Mammary epithelial cell (primary cell): ENCODE measurements at regions of chr19 and their contacts with region 1.

Region 1: GRCh38 chr19:41959056-41960053 is at the start of gene RABAC1:
- DNase-seq: peak; percentile 86
- H3K4me3 ChIP-seq: peak within 1 kb of the TSS; percentile 62 to 93 (median 76)
- H3K27ac ChIP-seq: peak within 1 kb of the TSS; percentile 77
- H3K4me1 ChIP-seq: peaks cover 14% of the 10 kb centered on the region
- H3K27me3 ChIP-seq: no peaks in the 10 kb centered on the region
- CTCF ChIP-seq: peak; percentile 6 to 30
- total RNA-seq, gene RABAC1: 74.8 to 154 TPM

Region 2: DNA sequence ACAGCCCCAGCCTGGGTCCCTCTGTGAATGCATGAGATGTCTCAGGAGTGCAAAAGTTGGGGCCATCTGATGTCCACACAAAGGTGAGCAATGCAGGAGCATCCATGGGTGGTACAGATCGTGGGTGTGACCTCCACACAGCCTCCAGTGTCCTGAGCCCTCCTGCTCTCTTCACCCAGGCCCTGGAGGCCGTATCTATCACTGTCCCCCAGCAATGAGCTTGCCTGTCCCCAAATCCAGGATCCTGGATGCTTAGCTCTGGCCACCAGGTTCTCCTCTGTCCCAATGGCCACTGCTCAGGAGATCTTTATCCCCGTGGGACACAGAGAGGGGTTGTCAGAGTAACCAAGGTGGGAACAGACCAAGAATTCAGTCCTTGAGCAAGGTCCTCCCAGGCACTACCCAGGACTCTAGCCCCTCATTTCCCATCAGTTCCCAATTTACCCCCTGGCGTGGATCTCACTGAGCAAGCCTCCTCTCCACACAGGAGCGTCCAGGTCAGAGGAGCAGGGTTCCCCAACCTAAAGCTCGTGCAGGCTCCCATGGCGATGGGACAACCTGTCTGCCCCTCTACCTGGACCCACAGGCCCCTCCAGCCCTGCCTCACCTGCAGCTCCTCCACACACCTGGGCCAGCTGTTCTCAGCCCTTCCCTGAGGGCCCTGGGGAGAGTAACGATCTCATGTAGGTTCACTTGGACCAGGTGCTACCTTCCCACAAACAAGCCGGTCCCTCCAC is 372.1 kb before region 1 on chr19:
- CTCF ChIA-PET with region 1: no interaction called
- dilution Hi-C with region 1: no loop called
- in situ Hi-C with region 1: no loop called
- intact Hi-C with region 1: no loop called
- DNase-seq: no peak
- H3K4me3 ChIP-seq: no peak overlapping the region
- H3K27ac ChIP-seq: no peak overlapping the region
- H3K4me1 ChIP-seq: no peaks in the 10 kb centered on the region
- H3K27me3 ChIP-seq: no peaks in the 10 kb centered on the region
- CTCF ChIP-seq: no peak

Region 3: DNA sequence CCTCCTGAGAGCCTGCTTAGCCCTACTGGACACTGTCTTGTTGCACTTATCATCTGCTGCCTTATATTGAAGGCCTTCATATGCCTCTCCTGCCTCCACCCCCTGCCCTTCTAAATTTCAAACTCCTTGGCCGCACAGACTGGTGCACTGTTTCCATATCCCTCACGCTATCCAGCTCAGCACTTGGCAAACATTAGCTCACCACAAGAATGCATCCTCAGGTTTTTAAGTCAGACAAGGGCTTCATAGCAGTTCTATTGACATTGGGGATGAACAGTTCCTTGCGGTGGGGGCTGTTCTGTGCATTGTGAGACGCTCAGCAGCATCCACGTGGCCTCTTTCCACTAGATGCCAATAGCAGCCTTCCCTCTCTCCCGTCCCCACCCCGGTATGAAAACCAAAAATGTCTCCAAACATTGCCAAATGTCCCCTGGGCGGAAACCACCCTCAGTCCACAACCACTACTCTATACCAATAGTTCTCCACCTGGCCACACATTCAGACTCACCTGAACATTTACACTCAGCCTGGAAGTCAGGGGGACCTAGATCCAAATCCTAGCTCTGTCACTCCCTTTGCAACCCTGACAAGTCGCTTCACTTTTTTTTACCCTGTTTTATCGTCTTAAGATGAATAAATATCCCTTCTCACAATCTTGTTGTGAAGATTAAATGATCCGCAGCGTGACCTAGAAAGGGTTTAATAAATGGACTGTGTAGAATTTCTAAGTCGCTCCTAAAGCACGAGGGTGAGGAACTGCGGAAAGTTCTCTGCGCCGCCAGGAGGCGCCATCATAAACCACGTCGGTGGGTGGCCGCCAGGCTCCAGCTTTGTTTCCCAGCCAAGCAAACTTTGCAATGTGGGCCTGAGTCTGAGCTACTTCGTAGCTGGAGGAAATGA is 166.6 kb before region 1 on chr19:
- CTCF ChIA-PET with region 1: interaction called, 3 read pairs
- dilution Hi-C with region 1: no loop called
- in situ Hi-C with region 1: no loop called
- intact Hi-C with region 1: loop called (anchors 1 kb)
- DNase-seq: peak; percentile 35
- H3K4me3 ChIP-seq: no peak overlapping the region
- H3K27ac ChIP-seq: no peak overlapping the region
- H3K4me1 ChIP-seq: no peaks in the 10 kb centered on the region
- H3K27me3 ChIP-seq: peaks cover 2% of the 10 kb centered on the region
- CTCF ChIP-seq: peak; percentile 62 to 73

Region 4: DNA sequence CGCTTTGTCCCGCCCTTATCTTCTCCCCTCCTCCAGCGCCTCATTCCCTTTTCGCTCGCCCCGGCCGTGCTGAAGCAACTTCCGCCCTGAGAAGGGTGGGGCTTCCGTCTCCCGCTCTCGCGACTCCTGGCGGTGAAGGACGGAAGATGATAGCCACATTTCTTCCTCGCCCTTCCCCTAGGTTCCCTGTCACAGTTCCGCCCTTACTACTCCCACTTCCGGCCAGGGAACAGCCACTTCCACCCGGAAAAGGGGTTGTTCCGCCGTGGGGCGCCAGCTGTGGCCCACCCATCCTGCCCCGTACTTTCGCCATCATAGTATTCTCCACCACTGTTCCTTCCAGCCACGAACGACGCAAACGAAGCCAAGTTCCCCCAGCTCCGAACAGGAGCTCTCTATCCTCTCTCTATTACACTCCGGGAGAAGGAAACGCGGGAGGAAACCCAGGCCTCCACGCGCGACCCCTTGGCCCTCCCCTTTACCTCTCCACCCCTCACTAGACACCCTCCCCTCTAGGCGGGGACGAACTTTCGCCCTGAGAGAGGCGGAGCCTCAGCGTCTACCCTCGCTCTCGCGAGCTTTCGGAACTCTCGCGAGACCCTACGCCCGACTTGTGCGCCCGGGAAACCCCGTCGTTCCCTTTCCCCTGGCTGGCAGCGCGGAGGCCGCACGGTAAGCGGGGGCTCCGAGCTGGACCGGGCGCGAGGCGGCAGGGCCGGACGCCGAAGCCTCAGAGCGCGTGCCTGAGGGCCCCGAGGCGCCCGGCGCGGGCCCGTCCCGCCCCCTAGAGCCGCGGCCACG is 99.5 kb before region 1 on chr19 and contains the start of gene RPS19:
- CTCF ChIA-PET with region 1: no interaction called
- dilution Hi-C with region 1: no loop called
- in situ Hi-C with region 1: no loop called
- intact Hi-C with region 1: loop called (anchors 1 kb)
- DNase-seq: peak; percentile 99
- H3K4me3 ChIP-seq: peak within 1 kb of the TSS; percentile 77 to 92 (median 84)
- H3K27ac ChIP-seq: peak within 1 kb of the TSS; percentile 93
- H3K4me1 ChIP-seq: peaks cover 30% of the 10 kb centered on the region
- H3K27me3 ChIP-seq: no peaks in the 10 kb centered on the region
- CTCF ChIP-seq: peak; percentile 43 to 62
- total RNA-seq, gene RPS19: 530 to 2,153 TPM

Region 5: GRCh38 chr19:41883821-41884733 is 75.3 kb before region 1 on chr19:
- CTCF ChIA-PET with region 1: interaction called, 3 read pairs
- dilution Hi-C with region 1: loop called (anchors 5 kb)
- in situ Hi-C with region 1: loop called (anchors 5 kb)
- intact Hi-C with region 1: loop called (anchors 2 kb)
- DNase-seq: peak; percentile 97
- H3K4me3 ChIP-seq: peak overlapping the region; percentile 70 to 96 (median 87)
- H3K27ac ChIP-seq: peak overlapping the region; percentile 77
- H3K4me1 ChIP-seq: peaks cover 41% of the 10 kb centered on the region
- H3K27me3 ChIP-seq: no peaks in the 10 kb centered on the region
- CTCF ChIP-seq: peak in 1 of 2 donors; percentile 35

Region 6: DNA sequence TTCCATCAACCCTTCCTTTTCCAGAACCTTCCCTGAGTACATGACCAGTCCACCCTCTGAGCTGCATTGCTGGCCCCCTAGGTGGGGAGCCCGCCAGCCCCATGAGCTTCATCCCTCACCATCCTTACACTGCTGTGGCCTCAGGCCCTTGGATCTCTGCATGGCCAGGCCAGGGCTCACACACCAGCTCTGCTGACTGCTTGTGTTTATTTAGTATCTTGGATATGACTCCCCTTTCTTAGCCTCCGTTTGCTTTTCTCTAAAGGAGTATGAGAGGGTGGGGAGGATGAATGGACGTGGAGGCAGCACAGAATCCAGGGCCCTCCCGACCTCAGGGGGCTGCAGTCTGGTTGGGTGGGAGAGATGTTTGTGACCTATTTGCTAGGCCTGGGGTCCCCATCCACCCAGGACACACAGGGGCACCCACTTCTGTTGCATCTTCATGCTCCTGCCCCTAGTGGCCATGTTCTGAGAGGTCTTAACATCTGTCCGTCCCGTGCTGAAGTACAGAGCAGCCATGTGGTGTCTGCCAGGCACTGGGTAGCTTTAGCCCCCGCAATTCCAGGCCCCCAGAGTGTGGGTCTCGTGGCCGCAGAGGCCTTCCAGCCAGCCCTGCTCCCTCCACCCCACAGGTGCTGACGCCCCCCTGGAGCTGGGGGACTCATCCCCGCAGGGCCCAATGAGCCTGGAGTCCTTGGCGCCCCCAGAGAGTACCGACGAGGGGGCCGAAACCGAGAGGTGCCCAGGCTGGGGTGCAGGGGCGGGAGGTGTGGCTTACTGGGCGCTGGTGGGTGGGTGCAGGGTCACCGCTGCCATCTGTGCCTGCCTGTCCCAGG is 63.4 kb before region 1 on chr19:
- CTCF ChIA-PET with region 1: no interaction called
- dilution Hi-C with region 1: no loop called
- in situ Hi-C with region 1: no loop called
- intact Hi-C with region 1: no loop called
- DNase-seq: no peak
- H3K4me3 ChIP-seq: no peak overlapping the region
- H3K27ac ChIP-seq: no peak overlapping the region
- H3K4me1 ChIP-seq: no peaks in the 10 kb centered on the region
- H3K27me3 ChIP-seq: no peaks in the 10 kb centered on the region
- CTCF ChIP-seq: peak in 1 of 2 donors; percentile 16

Region 7: GRCh38 chr19:42032431-42032830 is 73.1 kb after region 1 on chr19:
- CTCF ChIA-PET with region 1: interaction called, 3 read pairs
- dilution Hi-C with region 1: no loop called
- in situ Hi-C with region 1: no loop called
- intact Hi-C with region 1: loop called (anchors 1 kb)
- DNase-seq: no peak
- H3K4me3 ChIP-seq: no peak overlapping the region
- H3K27ac ChIP-seq: no peak overlapping the region
- H3K4me1 ChIP-seq: no peaks in the 10 kb centered on the region
- H3K27me3 ChIP-seq: peaks cover 3% of the 10 kb centered on the region
- CTCF ChIP-seq: no peak

Region 8: GRCh38 chr19:42092350-42092749 is 133.0 kb after region 1 on chr19:
- CTCF ChIA-PET with region 1: no interaction called
- dilution Hi-C with region 1: no loop called
- in situ Hi-C with region 1: no loop called
- intact Hi-C with region 1: loop called (anchors 2 kb)
- DNase-seq: peak; percentile 41
- H3K4me3 ChIP-seq: no peak overlapping the region
- H3K27ac ChIP-seq: no peak overlapping the region
- H3K4me1 ChIP-seq: peaks cover 17% of the 10 kb centered on the region
- H3K27me3 ChIP-seq: no peaks in the 10 kb centered on the region
- CTCF ChIP-seq: peak; percentile 57 to 86

Region 9: DNA sequence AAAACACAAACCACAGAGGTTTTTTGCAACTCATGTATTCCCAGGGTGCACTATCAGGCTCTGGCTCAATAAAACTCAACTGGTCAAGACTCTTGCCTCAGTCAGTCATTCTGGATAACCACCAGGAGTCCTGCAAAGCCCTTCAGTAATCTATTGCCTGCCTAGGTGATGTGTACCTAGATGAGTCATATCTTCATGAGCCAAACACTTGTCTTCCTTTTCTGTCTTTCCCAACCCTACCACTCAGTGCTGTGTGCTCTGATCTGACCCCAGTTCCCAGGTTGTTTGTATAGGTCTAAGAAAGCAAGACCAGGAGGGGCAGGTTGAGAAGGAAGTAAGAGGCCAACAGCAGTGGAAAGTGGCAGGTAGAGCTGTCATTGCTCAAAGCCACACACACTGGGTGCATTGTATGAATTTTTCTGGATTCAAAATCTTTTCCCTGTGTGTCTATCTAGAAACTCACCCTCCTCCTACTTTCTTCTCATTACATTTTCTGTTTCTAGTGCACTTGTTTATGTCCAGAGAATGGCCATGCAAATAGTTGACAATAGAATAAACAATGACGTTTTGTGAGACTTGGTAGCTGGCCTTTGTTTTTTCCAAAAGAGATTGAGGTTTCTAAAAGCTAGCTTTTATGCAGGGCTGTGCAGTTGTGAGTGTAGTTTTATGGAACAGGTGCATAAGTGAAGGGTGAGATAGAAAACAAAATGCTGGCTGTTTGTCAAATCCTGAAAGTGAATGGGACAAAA is 872.1 kb after region 1 on chr19:
- CTCF ChIA-PET with region 1: no interaction called
- dilution Hi-C with region 1: no loop called
- in situ Hi-C with region 1: no loop called
- intact Hi-C with region 1: no loop called
- DNase-seq: peak; percentile 85
- H3K4me3 ChIP-seq: no peak overlapping the region
- H3K27ac ChIP-seq: peak overlapping the region; percentile 71
- H3K4me1 ChIP-seq: peaks cover 36% of the 10 kb centered on the region
- H3K27me3 ChIP-seq: no peaks in the 10 kb centered on the region
- CTCF ChIP-seq: peak; percentile 21 to 65